ENCODE measurements at regions of chr22 and their contacts with region 1.

Region 1: GRCh38 chr22:17396549-17396948 is 27.3 kb downstream of the CECR2 start:
- DNase-seq: no peak
- H3K4me3 ChIP-seq: no peak overlapping the region
- CTCF ChIP-seq: no peak
- POLR2A ChIP-seq: no peak

Region 2: DNA sequence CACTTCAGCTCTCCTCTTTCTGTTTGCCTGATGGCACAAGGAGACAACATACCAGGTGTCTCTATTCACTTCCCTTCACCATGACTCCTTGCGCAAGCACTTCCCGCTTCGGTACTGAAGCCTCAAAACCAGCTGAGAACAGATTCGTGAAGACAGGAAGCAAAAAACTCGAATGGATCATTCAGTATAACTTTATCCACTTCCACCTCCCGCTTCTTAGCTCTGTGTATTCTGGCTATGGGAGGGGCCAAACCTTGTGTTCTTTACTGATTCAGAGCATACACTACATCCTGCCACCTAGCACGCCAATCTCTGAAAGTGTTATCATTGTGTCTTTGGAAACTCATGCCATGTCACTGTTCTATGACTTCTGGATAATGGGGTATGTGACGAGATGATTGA is 115.1 kb before region 1 on chr22:
- intact Hi-C with region 1: loop called (anchors 10 kb)
- DNase-seq: no peak
- H3K4me3 ChIP-seq: no peak overlapping the region
- CTCF ChIP-seq: no peak
- POLR2A ChIP-seq: no peak

Region 3: GRCh38 chr22:17451316-17451715 is 54.8 kb after region 1 on chr22:
- intact Hi-C with region 1: no loop called
- DNase-seq: no peak
- H3K4me3 ChIP-seq: no peak overlapping the region
- CTCF ChIP-seq: no peak
- POLR2A ChIP-seq: no peak